Prostate gland (tissue), 2 donors: ENCODE measurements at regions of chr11 and their contacts with region 1.

Region 1: DNA sequence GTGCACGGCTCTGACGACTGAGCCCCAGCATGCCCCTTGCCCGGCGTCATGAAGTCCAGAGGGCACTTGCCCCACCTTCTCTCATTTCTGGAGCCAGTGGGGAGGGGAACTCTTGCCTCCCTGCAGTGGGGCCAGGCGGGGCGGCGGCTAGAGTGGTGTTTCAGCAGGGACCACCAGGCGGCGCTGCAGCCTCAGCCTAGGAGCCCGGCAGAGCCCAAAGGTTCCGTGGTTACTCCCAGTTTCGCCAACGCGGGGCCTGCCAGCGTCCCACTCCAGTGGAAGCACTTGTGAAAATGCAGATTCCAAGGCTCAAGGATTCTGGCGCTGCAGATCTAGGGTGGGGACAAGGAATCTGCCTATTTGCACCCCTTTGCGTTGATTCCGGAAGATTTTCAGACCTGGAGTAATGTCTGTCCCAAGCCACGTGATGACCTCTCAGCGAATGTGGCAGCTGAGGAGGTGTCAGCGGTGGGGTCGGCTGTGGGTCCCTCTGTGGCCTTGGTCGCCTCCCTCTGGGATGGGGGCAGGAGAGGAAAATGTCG is 55.7 kb downstream of the CD82 start:
- DNase-seq: peak; percentile 55
- H3K4me3 ChIP-seq: no peak overlapping the region
- H3K27ac ChIP-seq: no peak overlapping the region
- H3K4me1 ChIP-seq: no peaks in the 10 kb centered on the region
- H3K27me3 ChIP-seq: no peaks in the 10 kb centered on the region
- CTCF ChIP-seq: peak; percentile 90 to 96 (median 94)
- POLR2A ChIP-seq: no peak

Region 2: DNA sequence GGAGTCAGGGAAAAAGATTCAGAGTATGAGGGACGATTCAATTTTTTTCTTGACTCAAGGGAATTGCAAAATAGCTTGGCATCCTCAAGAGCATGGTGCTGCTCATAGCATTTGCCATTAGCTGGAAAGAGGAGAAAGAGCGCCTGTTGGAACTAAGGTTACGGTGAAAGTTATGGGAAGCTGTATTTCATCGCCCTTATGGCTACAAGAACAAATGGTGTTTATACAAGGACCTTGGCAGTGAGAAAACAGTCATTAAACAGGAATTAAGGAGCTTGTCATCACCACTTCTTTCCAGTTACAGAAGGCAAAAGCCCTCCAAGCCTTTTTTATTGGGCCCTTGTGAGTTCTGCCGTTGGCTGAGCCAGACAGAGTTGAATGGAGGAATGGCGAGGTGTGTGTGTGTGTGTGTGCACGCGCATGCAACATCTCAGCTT is 385.4 kb before region 1 on chr11:
- intact Hi-C with region 1: no loop called
- DNase-seq: no peak
- H3K4me3 ChIP-seq: no peak overlapping the region
- H3K27ac ChIP-seq: no peak overlapping the region
- H3K4me1 ChIP-seq: no peaks in the 10 kb centered on the region
- H3K27me3 ChIP-seq: no peaks in the 10 kb centered on the region
- CTCF ChIP-seq: no peak
- POLR2A ChIP-seq: no peak

Region 3: DNA sequence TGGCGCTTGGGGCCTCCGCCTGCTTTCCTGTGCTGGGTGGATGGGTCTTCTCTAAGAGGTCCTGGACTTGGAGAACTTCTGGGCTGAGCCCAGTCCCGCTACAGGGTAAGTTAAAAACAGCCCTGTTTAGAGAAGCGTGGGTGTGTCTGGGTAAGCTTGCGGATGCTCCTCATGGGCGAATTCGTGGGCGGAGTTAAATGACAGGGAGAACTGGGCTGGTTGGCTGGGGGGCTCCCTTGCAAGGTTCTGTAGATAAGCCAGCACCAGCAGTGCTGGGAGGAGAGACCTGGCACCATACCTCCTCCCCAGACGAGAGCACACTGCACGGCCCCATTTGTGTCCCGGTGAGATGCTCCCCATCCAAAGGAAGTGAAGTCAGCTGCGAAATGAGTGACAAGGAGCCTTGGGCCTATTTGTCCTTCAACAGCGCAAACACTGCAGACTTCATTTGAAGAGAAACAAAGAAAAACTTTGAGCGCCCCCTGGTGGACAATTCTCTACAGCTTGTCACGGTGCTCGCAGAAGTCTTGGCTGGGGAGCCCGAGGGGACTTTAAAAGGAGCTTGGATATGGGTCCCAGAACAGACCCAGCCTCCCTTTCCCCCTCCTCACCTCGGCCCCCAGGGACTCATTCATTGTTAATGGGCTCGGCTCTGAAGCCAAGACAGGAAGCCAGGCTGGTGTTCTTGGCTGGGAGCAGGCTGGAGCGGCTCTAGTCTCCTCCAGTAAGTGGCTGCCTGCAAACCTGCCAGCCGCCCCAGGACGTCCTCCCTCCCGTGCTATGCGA is 290.0 kb after region 1 on chr11:
- intact Hi-C with region 1: loop called (anchors 1 kb)
- DNase-seq: peak; percentile 90
- H3K4me3 ChIP-seq: no peak overlapping the region
- H3K27ac ChIP-seq: no peak overlapping the region
- H3K4me1 ChIP-seq: no peaks in the 10 kb centered on the region
- H3K27me3 ChIP-seq: no peaks in the 10 kb centered on the region
- CTCF ChIP-seq: peak; percentile 79 to 95 (median 83)
- POLR2A ChIP-seq: no peak

Region 4: GRCh38 chr11:45105233-45105983 is 484.2 kb after region 1 on chr11:
- intact Hi-C with region 1: loop called (anchors 5 kb)
- DNase-seq: peak; percentile 63
- H3K4me3 ChIP-seq: no peak overlapping the region
- H3K27ac ChIP-seq: no peak overlapping the region
- H3K4me1 ChIP-seq: no peaks in the 10 kb centered on the region
- H3K27me3 ChIP-seq: peaks cover 4% of the 10 kb centered on the region
- CTCF ChIP-seq: peak; percentile 83 to 95 (median 90)
- POLR2A ChIP-seq: no peak